ENCODE measurements at regions of chr5 and their contacts with region 1.

Region 1: GRCh38 chr5:137498736-137499505 is at the start of gene SPOCK1:
- DNase-seq: peak; percentile 73 to 75
- H3K4me3 ChIP-seq: peak within 1 kb of the TSS in 1 of 3 donors; percentile 19
- H3K27ac ChIP-seq: no peak within 1 kb of the TSS
- H3K4me1 ChIP-seq: peaks cover 0 to 5% of the 10 kb centered on the region in 2 donors
- H3K27me3 ChIP-seq: no peaks in the 10 kb centered on the region
- CTCF ChIP-seq: peak; percentile 15 to 93 (median 87)
- POLR2A ChIP-seq: peak in 1 of 2 donors; percentile 10
- total RNA-seq, gene SPOCK1: 15.8 to 34.1 (median 27.5) TPM

Region 2: GRCh38 chr5:137320056-137321045 is 178.6 kb before region 1 on chr5:
- intact Hi-C with region 1: loop called (anchors 5 kb)
- DNase-seq: peak; percentile 48 to 52
- H3K4me3 ChIP-seq: no peak overlapping the region
- H3K27ac ChIP-seq: no peak overlapping the region
- H3K4me1 ChIP-seq: peaks cover 0 to 5% of the 10 kb centered on the region in 2 donors
- H3K27me3 ChIP-seq: no peaks in the 10 kb centered on the region
- CTCF ChIP-seq: peak; percentile 64 to 91 (median 78)
- POLR2A ChIP-seq: no peak

Region 3: DNA sequence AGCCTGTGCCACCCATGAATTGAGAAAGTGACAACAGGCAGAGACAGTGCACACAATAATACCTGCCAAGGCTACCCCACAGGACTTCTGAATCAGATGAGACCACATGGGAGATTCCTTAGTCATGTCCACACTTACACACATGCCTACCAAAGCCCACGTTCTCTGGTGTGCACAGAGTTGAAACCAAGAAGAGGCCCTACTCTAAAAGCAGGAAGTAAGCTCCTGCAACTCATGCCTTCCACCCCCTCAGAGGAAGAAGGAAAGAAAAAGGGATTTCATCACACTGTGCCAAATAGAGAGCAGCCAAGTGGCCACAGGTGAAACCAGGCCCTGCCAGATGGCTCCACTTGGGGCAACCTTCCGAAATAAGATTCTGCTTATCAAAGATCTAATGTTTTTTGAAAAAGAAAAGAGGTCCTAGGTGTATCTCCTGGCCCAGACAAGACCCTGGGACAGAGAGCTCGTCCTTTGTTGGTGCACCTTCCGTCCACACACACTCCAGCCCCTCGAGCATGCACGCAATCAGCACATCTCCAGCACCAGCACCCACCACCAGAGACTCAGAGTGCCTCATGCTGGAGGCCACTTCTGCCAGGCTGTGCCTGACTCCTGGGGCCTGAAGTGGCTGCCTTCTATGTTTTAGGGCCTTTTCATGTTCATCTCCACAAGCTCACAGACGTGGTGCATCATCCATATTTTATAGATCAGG is 114.8 kb after region 1 on chr5:
- intact Hi-C with region 1: no loop called
- DNase-seq: no peak
- H3K4me3 ChIP-seq: no peak overlapping the region
- H3K27ac ChIP-seq: no peak overlapping the region
- H3K4me1 ChIP-seq: peaks cover 12 to 13% of the 10 kb centered on the region in 2 donors
- H3K27me3 ChIP-seq: no peaks in the 10 kb centered on the region
- CTCF ChIP-seq: no peak
- POLR2A ChIP-seq: no peak